ENCODE measurements at regions of chr15 and their contacts with region 1.

Region 1: GRCh38 chr15:55183679-55184078 is 13.1 kb downstream of the RSL24D1 start:
- DNase-seq: no peak
- H3K4me3 ChIP-seq: no peak overlapping the region
- H3K27ac ChIP-seq: no peak overlapping the region
- H3K27me3 ChIP-seq: no peaks in the 10 kb centered on the region
- CTCF ChIP-seq: no peak

Region 2: GRCh38 chr15:55108858-55109518 is 74.7 kb before region 1 on chr15:
- CTCF ChIA-PET with region 1: no interaction called
- POLR2A ChIA-PET with region 1: no interaction called
- DNase-seq: no peak
- H3K4me3 ChIP-seq: no peak overlapping the region
- H3K27ac ChIP-seq: no peak overlapping the region
- H3K27me3 ChIP-seq: no peaks in the 10 kb centered on the region
- CTCF ChIP-seq: peak; percentile 82

Region 3: GRCh38 chr15:55168329-55168974 is 15.2 kb before region 1 on chr15:
- CTCF ChIA-PET with region 1: interaction called, 33 read pairs
- POLR2A ChIA-PET with region 1: no interaction called
- DNase-seq: peak; percentile 21
- H3K4me3 ChIP-seq: no peak overlapping the region
- H3K27ac ChIP-seq: no peak overlapping the region
- H3K27me3 ChIP-seq: no peaks in the 10 kb centered on the region
- CTCF ChIP-seq: peak; percentile 92

Measured in AG04450 (cell line).